Transverse colon (tissue), 4 donors: ENCODE measurements at regions of chr10 and their contacts with region 1.

Region 1: GRCh38 chr10:20608503-20608902 is 288.6 kb downstream of the NEBL start:
- DNase-seq: no peak
- H3K4me3 ChIP-seq: no peak overlapping the region
- H3K27ac ChIP-seq: no peak overlapping the region
- H3K4me1 ChIP-seq: no peaks in the 10 kb centered on the region
- H3K27me3 ChIP-seq: no peaks in the 10 kb centered on the region
- CTCF ChIP-seq: no peak
- EP300 ChIP-seq: no peak
- POLR2A ChIP-seq: no peak

Region 2: DNA sequence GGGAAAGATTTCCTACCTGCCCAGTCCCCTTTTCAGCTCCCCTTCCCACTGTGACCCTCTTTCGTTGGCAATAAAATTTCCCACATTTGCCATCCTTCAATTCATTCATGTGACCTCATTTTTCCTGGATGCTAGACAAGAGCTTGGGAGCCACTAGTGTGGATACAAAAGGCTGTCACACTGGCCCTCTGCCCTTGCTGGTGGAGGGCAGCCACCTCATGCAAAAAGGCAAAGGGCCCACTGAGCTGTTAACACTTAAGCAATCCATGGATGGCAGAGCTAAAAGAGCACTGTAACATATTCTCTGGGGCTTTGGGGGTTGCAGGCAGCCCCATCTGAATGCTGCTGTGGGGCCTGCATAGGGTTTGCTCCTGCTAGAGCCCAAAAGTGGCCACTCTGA is 26.5 kb before region 1 on chr10:
- in situ Hi-C with region 1: no loop called
- intact Hi-C with region 1: loop called (anchors 1 kb)
- DNase-seq: no peak
- H3K4me3 ChIP-seq: no peak overlapping the region
- H3K27ac ChIP-seq: no peak overlapping the region
- H3K4me1 ChIP-seq: no peaks in the 10 kb centered on the region
- H3K27me3 ChIP-seq: no peaks in the 10 kb centered on the region
- CTCF ChIP-seq: no peak
- EP300 ChIP-seq: no peak
- POLR2A ChIP-seq: no peak